Posterior vena cava (tissue), 2 donors: ENCODE measurements at regions of chr6 and their contacts with region 1.

Region 1: GRCh38 chr6:125114248-125114858 is 39.2 kb upstream of the TPD52L1 start:
- DNase-seq: no peak

Region 2: GRCh38 chr6:124870611-124871459 is 243.5 kb before region 1 on chr6:
- intact Hi-C with region 1: loop called in 1 of 2 experiments (anchors 5 kb)
- DNase-seq: no peak

Region 3: GRCh38 chr6:125191916-125192609 is 77.7 kb after region 1 on chr6:
- intact Hi-C with region 1: no loop called
- DNase-seq: no peak

Region 4: GRCh38 chr6:125316621-125317020 is 202.3 kb after region 1 on chr6:
- intact Hi-C with region 1: no loop called
- DNase-seq: no peak